ENCODE measurements at regions of chr4 and their contacts with region 1.

Region 1: GRCh38 chr4:151362404-151363164 is 37.2 kb upstream of the SH3D19 start:
- DNase-seq: no peak
- H3K4me3 ChIP-seq: no peak overlapping the region
- H3K27ac ChIP-seq: no peak overlapping the region
- H3K4me1 ChIP-seq: no peaks in the 10 kb centered on the region
- H3K27me3 ChIP-seq: no peaks in the 10 kb centered on the region
- CTCF ChIP-seq: peak; percentile 92 to 95 (median 94)
- POLR2A ChIP-seq: no peak

Region 2: DNA sequence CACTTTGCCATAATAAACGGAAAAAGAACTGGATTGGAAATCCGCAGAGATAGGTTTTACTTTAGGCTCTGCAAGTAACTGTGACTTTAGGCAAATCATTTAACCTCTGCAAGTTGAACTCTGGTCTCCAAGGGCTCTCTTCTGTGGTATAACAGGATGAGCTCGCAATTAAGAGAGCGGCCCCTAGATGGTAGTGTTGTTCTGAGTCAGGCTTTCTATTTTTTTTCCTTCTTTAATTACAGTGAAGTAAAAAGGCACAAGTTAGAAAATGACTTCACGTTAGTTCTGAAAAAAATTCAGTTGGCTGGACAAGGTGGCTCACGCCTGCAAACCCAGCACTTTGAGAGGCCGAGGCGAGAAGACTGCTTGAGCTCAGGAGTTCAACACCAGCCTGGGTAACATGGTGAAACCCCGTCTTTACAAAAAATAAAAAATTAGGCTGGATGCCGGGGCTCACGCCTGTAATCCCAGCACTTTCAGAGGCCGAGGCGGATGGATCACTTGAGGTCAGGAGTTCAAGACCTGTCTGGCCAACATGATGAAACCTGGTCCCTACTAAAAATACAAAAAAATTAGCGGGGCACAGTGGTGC is 245.1 kb before region 1 on chr4:
- intact Hi-C with region 1: loop called (anchors 5 kb)
- DNase-seq: no peak
- H3K4me3 ChIP-seq: no peak overlapping the region
- H3K27ac ChIP-seq: peak overlapping the region; percentile 9
- H3K4me1 ChIP-seq: no peaks in the 10 kb centered on the region
- H3K27me3 ChIP-seq: no peaks in the 10 kb centered on the region
- CTCF ChIP-seq: peak; percentile 47 to 62 (median 52)
- POLR2A ChIP-seq: no peak